CD8-positive, alpha-beta T cell (primary cell): ENCODE measurements at regions of chr10 and their contacts with region 1.

Region 1: DNA sequence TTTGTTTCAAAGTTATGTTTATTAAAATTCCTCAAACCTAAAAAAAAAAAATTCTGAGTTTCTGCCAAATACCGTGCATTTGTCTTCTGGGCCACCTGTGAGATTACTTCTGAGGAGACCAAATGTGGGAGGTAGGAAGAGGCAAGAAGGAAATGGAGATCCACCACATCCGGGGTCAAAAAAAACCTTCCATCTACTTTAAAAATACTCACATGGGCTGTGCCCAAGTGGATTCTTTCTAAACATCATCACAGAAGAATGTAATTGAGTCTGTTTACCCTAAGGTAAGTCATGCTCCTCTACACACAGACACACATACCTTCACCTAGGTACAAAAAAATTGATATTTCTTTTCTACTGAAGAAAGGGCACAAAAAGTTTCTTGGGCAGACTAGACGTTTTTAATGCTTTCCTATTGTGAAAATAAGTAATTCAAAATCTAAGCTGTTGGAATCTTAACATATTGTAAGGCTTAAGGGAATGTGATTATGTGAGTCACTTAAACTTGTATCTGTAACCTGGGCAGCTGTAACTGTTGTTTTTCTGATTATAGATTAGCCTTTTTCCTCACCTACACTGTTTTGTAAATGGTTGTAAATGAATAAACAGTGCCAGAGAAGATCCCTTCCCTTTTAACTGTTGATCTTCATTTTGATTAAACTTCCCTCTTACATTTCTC is 19.1 kb upstream of the SPOCK2 start:
- DNase-seq: peak in 2 of 9 experiments; percentile 60 to 80
- ATAC-seq: peak; percentile 72
- H3K4me3 ChIP-seq: peak overlapping the region in 1 of 2 experiments; percentile 39
- H3K4me3 Mint-ChIP-seq: peak overlapping the region; percentile 72
- H3K27ac ChIP-seq: peak overlapping the region; percentile 36 to 50
- H3K27ac Mint-ChIP-seq: peak overlapping the region; percentile 93
- H3K4me1 ChIP-seq: peaks cover 84% of the 10 kb centered on the region
- H3K4me1 Mint-ChIP-seq: peaks cover 85% of the 10 kb centered on the region
- H3K27me3 ChIP-seq: no peaks in the 10 kb centered on the region
- H3K27me3 Mint-ChIP-seq: no peaks in the 10 kb centered on the region
- CTCF ChIP-seq: no peak

Region 2: DNA sequence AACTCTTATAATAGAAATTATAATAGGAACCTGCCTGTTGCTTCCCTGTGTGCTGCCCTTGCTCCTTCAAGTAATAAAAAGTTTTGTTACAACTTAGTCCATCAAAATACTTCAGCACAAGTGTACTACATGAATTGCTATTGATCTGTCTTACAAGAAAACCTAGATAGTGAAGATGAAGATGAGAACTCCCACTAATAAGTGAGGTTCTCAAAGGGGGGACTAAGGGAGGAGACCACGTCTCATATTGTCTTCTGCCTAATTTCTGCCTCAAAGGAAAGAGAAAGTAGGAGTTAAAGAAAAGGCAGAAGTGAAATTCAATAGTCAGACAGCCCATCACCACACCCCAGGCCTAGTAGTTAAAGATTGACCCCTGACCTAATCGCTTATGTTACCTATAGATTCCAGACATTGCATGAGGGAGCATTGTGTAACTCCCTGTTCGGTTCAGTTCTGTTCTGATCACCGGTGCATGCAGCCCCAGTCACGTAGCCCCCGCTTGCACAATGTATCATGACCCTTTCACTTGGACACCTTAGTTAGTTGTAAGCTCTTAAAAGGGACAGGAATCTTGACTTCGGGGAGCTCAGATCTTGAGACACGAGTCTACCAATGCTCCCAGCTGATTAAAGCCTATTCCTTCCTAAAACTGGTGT is 161.5 kb before region 1 on chr10:
- CTCF ChIA-PET with region 1: no interaction called
- POLR2A ChIA-PET with region 1: no interaction called
- intact Hi-C with region 1: no loop called
- DNase-seq: peak in 1 of 9 experiments; percentile 39
- ATAC-seq: no peak
- H3K4me3 ChIP-seq: no peak overlapping the region
- H3K4me3 Mint-ChIP-seq: no peak overlapping the region
- H3K27ac ChIP-seq: no peak overlapping the region
- H3K27ac Mint-ChIP-seq: no peak overlapping the region
- H3K4me1 ChIP-seq: no peaks in the 10 kb centered on the region
- H3K4me1 Mint-ChIP-seq: no peaks in the 10 kb centered on the region
- H3K27me3 ChIP-seq: no peaks in the 10 kb centered on the region
- H3K27me3 Mint-ChIP-seq: no peaks in the 10 kb centered on the region
- CTCF ChIP-seq: no peak

Region 3: DNA sequence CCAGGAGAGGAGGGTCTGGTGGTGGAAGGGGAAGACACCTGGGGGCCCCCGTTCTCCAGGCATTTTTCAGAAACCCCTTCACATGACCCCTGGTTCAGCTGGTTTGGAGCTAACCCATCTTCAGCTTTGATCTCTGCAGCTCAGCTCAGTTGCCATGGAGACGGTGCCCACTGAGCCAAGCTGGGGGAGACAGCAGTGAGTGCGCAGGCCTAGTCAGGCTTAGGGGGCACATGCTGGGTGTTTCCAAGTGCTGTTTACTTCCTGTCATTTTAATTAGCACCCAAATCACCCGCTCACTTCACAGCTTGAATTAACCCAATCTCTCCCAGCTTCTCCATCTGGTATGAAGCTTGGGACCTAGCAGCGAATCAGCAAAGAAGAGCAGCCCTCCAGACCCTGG is 28.1 kb before region 1 on chr10:
- CTCF ChIA-PET with region 1: interaction called, 4 read pairs
- POLR2A ChIA-PET with region 1: interaction called, 7 read pairs
- intact Hi-C with region 1: loop called in 1 of 2 experiments (anchors 1 kb)
- DNase-seq: peak; percentile 69 to 97 (median 88)
- ATAC-seq: peak; percentile 63
- H3K4me3 ChIP-seq: peak overlapping the region; percentile 32 to 36
- H3K4me3 Mint-ChIP-seq: peak overlapping the region; percentile 97
- H3K27ac ChIP-seq: peak overlapping the region; percentile 49 to 69
- H3K27ac Mint-ChIP-seq: peak overlapping the region; percentile 97
- H3K4me1 ChIP-seq: peaks cover 96% of the 10 kb centered on the region
- H3K4me1 Mint-ChIP-seq: peaks cover 94% of the 10 kb centered on the region
- H3K27me3 ChIP-seq: no peaks in the 10 kb centered on the region
- H3K27me3 Mint-ChIP-seq: no peaks in the 10 kb centered on the region
- CTCF ChIP-seq: no peak

Region 4: DNA sequence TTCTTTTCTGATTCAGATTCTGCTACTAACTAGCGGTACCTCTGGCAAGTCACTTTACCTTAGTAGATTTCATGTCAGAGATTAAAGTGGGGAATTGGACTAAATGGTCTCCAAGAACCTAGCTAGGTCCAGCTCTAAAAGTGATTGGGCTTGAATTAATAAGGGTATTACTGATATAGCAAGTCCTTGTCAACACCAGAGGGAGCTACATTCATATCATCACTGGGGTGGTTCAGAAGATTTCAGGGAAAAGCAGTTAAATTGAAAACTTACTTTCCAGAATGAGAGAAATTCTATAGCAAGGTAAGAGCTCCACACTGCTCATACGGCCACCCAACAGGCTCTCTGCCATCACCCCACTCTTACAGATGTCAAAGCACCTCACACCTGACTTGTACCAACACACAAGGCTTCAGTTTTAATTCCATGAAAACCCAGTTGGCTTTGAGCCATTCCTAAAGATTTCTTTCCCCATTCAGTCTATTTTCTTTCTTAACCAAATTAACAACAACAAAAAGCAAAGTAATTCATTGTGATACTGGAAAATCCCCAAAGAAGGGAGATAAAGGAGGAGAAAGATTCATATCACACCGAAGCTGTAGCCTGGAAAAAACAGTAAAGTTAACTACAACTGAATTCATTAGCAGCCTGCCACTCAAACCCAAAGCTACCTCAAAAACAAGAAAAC is 18.9 kb after region 1 on chr10:
- CTCF ChIA-PET with region 1: interaction called, 9 read pairs
- POLR2A ChIA-PET with region 1: interaction called, 3 read pairs
- intact Hi-C with region 1: loop called in 1 of 2 experiments (anchors 2 kb)
- DNase-seq: peak in 2 of 9 experiments; percentile 43 to 57
- ATAC-seq: no peak
- H3K4me3 ChIP-seq: no peak overlapping the region
- H3K4me3 Mint-ChIP-seq: no peak overlapping the region
- H3K27ac ChIP-seq: no peak overlapping the region
- H3K27ac Mint-ChIP-seq: no peak overlapping the region
- H3K4me1 ChIP-seq: peaks cover 12% of the 10 kb centered on the region
- H3K4me1 Mint-ChIP-seq: peaks cover 29% of the 10 kb centered on the region
- H3K27me3 ChIP-seq: no peaks in the 10 kb centered on the region
- H3K27me3 Mint-ChIP-seq: no peaks in the 10 kb centered on the region
- CTCF ChIP-seq: no peak

Region 5: GRCh38 chr10:72133517-72133916 is 26.1 kb after region 1 on chr10:
- CTCF ChIA-PET with region 1: interaction called, 10 read pairs
- POLR2A ChIA-PET with region 1: interaction called, 3 read pairs
- intact Hi-C with region 1: no loop called
- DNase-seq: no peak
- ATAC-seq: no peak
- H3K4me3 ChIP-seq: no peak overlapping the region
- H3K4me3 Mint-ChIP-seq: no peak overlapping the region
- H3K27ac ChIP-seq: no peak overlapping the region
- H3K27ac Mint-ChIP-seq: peak overlapping the region; percentile 30
- H3K4me1 ChIP-seq: peaks cover 41% of the 10 kb centered on the region
- H3K4me1 Mint-ChIP-seq: peaks cover 43% of the 10 kb centered on the region
- H3K27me3 ChIP-seq: no peaks in the 10 kb centered on the region
- H3K27me3 Mint-ChIP-seq: no peaks in the 10 kb centered on the region
- CTCF ChIP-seq: no peak

Region 6: GRCh38 chr10:72344932-72345331 is 237.5 kb after region 1 on chr10:
- CTCF ChIA-PET with region 1: no interaction called
- POLR2A ChIA-PET with region 1: no interaction called
- intact Hi-C with region 1: no loop called
- DNase-seq: peak in 2 of 9 experiments; percentile 14 to 25
- ATAC-seq: no peak
- H3K4me3 ChIP-seq: no peak overlapping the region
- H3K4me3 Mint-ChIP-seq: no peak overlapping the region
- H3K27ac ChIP-seq: peak overlapping the region in 1 of 2 experiments; percentile 31
- H3K27ac Mint-ChIP-seq: no peak overlapping the region
- H3K4me1 ChIP-seq: peaks cover 14% of the 10 kb centered on the region
- H3K4me1 Mint-ChIP-seq: peaks cover 23% of the 10 kb centered on the region
- H3K27me3 ChIP-seq: no peaks in the 10 kb centered on the region
- H3K27me3 Mint-ChIP-seq: no peaks in the 10 kb centered on the region
- CTCF ChIP-seq: no peak

Region 7: GRCh38 chr10:73358331-73359279 is 1251.1 kb after region 1 on chr10 and contains the start of gene CFAP70:
- CTCF ChIA-PET with region 1: no interaction called
- POLR2A ChIA-PET with region 1: no interaction called
- intact Hi-C with region 1: no loop called
- DNase-seq: peak; percentile 83 to 98 (median 90)
- ATAC-seq: peak; percentile 96
- H3K4me3 ChIP-seq: peak within 1 kb of the TSS; percentile 71 to 75
- H3K4me3 Mint-ChIP-seq: peak within 1 kb of the TSS; percentile 98
- H3K27ac ChIP-seq: peak within 1 kb of the TSS; percentile 78 to 88
- H3K27ac Mint-ChIP-seq: peak within 1 kb of the TSS; percentile 96
- H3K4me1 ChIP-seq: peaks cover 5% of the 10 kb centered on the region
- H3K4me1 Mint-ChIP-seq: peaks cover 16% of the 10 kb centered on the region
- H3K27me3 ChIP-seq: peaks cover 0 to 8% of the 10 kb centered on the region in 2 experiments
- H3K27me3 Mint-ChIP-seq: peaks cover 2% of the 10 kb centered on the region
- CTCF ChIP-seq: no peak
- total RNA-seq, gene CFAP70: 2.4 to 2.8 TPM